ENCODE measurements at regions of chr1 and their contacts with region 1.

Region 1: DNA sequence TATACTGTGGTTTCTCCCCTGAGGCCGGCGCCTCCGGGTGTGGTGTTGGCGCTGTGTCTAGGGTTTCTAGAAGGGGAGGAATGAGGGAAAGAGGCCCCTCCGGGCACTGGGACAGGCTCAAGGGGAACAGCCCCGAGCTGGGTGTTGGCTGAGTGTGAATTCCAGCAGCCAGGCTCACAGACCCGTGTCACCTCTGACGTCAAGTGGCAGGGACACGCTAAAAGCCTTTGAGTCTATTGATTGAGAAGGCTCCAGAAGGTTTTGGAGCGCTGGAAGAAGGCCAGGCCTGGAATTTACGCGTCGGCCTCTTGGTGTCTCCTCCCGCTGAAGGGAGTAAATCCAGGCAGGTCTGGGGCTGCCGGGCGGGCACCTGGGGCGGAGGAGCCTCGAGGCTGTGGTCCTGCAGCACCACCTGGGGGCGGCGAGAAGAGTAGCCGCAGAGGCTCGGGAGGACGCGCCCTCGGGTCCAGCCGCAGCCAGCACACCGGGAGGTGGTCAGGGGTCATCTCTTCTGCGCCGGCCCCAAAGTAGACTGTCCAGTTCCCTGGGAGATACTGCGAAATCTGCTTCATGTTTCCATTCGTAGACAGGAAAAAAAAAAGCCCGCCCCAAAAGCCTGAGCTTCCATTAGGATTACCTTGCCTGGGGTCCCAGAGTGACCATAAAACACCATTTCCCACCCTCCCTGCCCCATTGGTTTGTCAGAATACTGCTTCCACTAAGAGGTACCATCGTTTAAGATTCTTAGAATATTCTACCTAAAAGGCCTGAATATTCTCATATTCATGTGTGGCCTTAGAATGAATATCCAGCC is 61.7 kb downstream of the TLR5 start:
- DNase-seq: peak; percentile 75 to 88 (median 88)
- ATAC-seq: peak; percentile 98
- H3K4me3 ChIP-seq: no peak overlapping the region
- H3K4me1 ChIP-seq: peaks cover 4% of the 10 kb centered on the region
- CTCF ChIP-seq: peak; percentile 86

Region 2: DNA sequence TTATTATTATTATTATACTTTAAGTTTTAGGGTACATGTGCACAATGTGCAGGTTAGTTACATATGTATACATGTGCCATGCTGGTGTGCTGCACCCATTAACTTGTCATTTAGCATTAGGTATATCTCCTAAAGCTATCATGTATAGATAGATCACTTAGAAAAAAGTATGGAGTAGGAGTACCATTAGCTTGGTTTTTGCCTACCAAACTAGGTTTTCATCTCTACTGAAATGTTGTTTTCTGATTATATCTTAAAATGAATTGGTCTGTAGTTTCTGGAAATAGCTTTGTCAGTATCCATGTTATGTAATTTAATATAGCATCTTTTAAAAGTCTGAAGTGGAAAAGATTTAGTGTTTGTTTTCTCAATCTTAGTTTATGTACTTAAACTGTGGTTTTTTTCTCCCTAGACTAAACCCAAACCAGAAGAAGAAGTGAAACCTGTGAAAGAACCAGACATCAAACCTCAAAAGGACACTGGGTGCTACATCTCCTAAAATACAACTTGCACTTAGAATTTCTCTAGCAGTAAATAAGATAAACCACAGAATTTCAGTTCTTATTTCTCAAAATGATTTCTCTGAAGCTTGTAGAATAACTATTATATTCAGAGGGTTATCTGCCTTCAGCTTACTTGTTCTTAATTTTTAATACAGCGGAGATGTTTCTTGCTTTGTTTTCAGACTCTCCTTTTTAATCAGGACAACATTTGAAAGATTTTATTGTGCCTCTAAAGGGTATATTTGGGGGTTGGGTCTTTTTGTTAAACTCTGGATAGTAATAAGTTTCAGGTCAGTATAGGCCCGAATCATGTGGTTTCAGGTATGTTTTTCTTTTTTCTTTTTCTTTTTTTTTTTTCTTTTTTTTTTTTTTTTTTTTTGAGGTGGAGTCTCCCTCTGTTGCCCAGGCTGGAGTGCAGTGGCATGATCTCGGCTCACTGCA is 348.9 kb before region 1 on chr1:
- intact Hi-C with region 1: loop called in 1 of 2 experiments (anchors 10 kb)
- DNase-seq: no peak
- ATAC-seq: peak; percentile 57
- H3K4me3 ChIP-seq: no peak overlapping the region
- H3K4me1 ChIP-seq: no peaks in the 10 kb centered on the region
- CTCF ChIP-seq: no peak

Region 3: DNA sequence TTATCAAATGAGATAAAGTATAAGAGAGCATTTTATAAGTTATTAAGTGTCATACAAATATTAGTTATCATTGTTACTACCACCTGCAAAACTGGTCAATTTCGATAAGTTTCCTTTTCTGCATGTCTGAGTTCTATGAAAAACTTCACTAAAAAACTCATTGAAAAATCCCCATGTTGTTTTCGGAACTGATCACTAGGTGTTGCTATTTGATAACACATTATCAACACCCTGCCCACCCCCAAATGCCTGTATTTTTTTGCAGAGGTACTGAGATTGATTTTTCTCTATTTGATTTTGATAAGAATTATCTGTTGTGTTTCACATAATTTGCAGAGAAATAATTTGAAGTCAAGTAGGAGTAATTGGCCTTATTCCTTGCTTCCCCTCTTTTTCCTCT is 288.6 kb before region 1 on chr1:
- intact Hi-C with region 1: loop called (anchors 5 to 10 kb)
- DNase-seq: no peak
- ATAC-seq: no peak
- H3K4me3 ChIP-seq: no peak overlapping the region
- H3K4me1 ChIP-seq: no peaks in the 10 kb centered on the region
- CTCF ChIP-seq: no peak

Measured in mucosa of descending colon (tissue), 3 donors.